ENCODE measurements at regions of chr5 and their contacts with region 1.

Region 1: DNA sequence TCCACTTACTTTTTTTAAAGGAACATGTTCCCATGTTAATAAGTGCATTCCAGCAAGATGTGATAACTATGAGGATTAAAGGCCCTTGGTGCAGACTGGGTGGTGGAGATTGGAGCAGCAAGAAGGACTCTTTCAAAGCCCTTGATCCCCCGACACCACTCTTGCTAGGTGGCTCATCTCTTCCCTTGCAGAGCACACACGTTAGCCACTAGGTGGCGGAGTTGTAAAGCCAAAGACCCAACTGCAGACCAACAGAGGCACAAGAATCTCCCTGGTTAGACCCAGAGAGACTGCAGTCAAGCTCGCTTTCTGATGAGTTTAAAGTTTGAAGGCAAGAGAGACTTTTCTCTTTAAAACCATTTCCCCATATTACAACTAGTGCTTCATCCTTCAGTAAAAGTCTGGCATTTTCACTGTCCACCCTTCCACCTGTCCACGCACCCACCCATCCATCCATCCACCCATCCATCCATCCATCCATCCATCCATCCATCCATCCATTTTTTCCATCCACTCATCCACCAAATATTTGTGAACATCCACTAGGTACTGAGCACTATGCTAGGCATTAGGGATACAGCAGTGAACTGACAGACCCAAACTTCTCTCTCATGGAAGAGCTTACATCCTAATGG is 226.9 kb downstream of the MSX2 start:
- DNase-seq: peak; percentile 89
- H3K4me3 Mint-ChIP-seq: no peak overlapping the region
- H3K27ac Mint-ChIP-seq: no peak overlapping the region
- H3K4me1 Mint-ChIP-seq: no peaks in the 10 kb centered on the region
- H3K27me3 Mint-ChIP-seq: peaks cover 54% of the 10 kb centered on the region
- CTCF ChIP-seq: peak; percentile 93

Region 2: GRCh38 chr5:174755103-174755502 is 196.2 kb before region 1 on chr5:
- CTCF ChIA-PET with region 1: no interaction called
- POLR2A ChIA-PET with region 1: no interaction called
- intact Hi-C with region 1: no loop called
- DNase-seq: peak; percentile 38
- H3K4me3 Mint-ChIP-seq: no peak overlapping the region
- H3K27ac Mint-ChIP-seq: no peak overlapping the region
- H3K4me1 Mint-ChIP-seq: peaks cover 5% of the 10 kb centered on the region
- H3K27me3 Mint-ChIP-seq: no peaks in the 10 kb centered on the region
- CTCF ChIP-seq: peak; percentile 33

Region 3: DNA sequence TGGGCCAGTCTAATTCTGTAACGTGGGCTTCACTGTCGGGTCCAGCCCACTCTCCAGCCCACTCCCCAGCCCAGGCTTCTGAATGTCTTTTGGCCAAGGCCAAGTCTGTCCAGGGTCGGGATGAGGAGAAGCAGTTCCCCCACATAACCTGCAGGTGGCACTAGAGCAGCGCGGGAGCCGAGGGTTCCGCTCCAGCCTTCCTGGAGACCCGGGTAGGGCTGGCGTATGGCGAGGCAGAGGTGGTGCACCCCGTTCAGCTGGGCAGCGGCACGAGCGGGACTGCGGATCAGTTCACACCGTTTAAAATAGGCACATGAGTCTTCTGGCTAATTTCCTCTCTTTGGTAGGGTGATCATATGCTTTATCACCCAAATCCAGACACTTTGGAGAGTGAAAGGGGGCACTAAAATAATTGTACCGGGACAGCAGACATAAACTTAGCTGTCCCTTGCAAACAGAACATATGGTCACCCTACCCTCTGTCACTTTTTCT is 41.0 kb before region 1 on chr5:
- CTCF ChIA-PET with region 1: interaction called, 13 read pairs
- POLR2A ChIA-PET with region 1: no interaction called
- intact Hi-C with region 1: no loop called
- DNase-seq: peak; percentile 77
- H3K4me3 Mint-ChIP-seq: no peak overlapping the region
- H3K27ac Mint-ChIP-seq: no peak overlapping the region
- H3K4me1 Mint-ChIP-seq: no peaks in the 10 kb centered on the region
- H3K27me3 Mint-ChIP-seq: peaks cover 43% of the 10 kb centered on the region
- CTCF ChIP-seq: peak; percentile 99

Region 4: DNA sequence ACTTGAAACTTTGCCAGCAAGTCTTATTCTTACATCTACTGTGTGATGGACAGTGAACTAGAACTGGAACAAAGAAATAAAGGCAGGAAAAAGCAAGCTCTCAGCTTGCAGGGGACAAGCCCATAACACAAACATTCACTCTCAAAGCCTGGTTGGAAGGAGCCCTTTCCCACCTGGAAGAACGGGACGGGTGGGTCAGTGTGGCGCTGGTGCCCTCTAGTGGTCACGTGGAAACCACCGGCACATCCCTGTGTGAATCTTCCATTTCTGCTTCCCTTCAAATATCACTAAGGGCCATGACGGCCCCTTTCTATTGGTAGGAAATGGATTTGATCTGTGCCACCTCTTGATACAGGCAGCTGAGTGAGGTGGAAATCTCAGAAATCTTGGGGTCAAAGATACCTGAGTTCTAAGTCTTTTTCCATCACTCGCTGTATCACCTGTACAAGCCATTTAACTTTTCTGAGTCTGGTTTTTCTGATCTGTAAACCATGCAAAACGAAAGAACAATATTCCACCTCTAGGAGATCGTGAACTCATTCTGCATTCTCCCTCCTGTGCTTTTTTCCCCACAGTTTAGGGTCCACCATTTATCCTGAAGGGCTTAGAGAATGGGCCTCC is 15.3 kb before region 1 on chr5:
- CTCF ChIA-PET with region 1: interaction called, 13 read pairs
- POLR2A ChIA-PET with region 1: no interaction called
- intact Hi-C with region 1: no loop called
- DNase-seq: peak; percentile 69
- H3K4me3 Mint-ChIP-seq: no peak overlapping the region
- H3K27ac Mint-ChIP-seq: no peak overlapping the region
- H3K4me1 Mint-ChIP-seq: no peaks in the 10 kb centered on the region
- H3K27me3 Mint-ChIP-seq: peaks cover 42% of the 10 kb centered on the region
- CTCF ChIP-seq: peak; percentile 99

Region 5: DNA sequence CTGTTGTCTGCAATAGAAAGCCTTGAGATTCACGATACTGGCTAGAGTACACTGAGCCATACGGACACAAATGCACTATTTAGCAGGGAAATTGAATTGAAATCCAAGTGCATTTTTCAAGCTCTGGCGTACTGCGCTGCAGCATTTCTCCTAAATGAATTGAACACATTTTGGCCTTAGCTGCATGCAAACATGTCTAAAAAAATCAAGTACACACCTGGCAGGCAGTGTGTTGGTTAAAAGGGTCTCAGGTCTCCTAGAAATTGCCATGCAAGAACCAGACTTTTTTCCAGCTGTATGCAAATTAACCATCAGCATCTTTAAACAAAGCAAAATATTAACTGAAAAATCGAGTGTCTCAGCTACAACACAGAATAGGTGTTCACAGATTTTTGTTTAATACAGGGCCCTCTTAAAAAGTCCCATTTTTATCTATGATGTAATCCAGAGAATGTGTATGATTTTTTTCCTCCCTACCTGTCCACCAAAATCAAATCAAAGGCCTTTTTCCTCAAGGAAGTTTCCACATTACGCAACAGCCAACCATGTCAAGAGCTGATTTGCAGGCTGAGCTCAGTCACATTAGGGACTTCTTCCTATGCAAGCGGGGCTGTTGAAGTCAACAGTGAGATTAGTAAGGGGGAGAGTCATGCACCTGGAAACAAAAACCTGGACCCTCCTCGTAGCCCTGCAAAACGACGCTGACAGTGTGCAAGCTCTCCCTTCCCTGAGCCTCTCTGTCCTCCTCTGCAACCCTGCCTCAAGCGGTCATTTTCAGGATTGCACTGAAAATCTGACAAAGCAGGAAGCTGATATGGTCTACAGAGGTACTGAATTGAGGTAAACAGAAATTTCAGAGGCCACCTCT is 513.0 kb after region 1 on chr5:
- CTCF ChIA-PET with region 1: interaction called, 80 read pairs
- POLR2A ChIA-PET with region 1: interaction called, 7 read pairs
- intact Hi-C with region 1: loop called (anchors 1 kb)
- DNase-seq: peak; percentile 74
- H3K4me3 Mint-ChIP-seq: no peak overlapping the region
- H3K27ac Mint-ChIP-seq: no peak overlapping the region
- H3K4me1 Mint-ChIP-seq: peaks cover 11% of the 10 kb centered on the region
- H3K27me3 Mint-ChIP-seq: peaks cover 13% of the 10 kb centered on the region
- CTCF ChIP-seq: peak; percentile 88

Region 6: GRCh38 chr5:175572886-175573285 is 621.6 kb after region 1 on chr5:
- CTCF ChIA-PET with region 1: no interaction called
- POLR2A ChIA-PET with region 1: no interaction called
- intact Hi-C with region 1: loop called (anchors 1 kb)
- DNase-seq: peak; percentile 31
- H3K4me3 Mint-ChIP-seq: no peak overlapping the region
- H3K27ac Mint-ChIP-seq: no peak overlapping the region
- H3K4me1 Mint-ChIP-seq: peaks cover 7% of the 10 kb centered on the region
- H3K27me3 Mint-ChIP-seq: peaks cover 17% of the 10 kb centered on the region
- CTCF ChIP-seq: no peak

Region 7: DNA sequence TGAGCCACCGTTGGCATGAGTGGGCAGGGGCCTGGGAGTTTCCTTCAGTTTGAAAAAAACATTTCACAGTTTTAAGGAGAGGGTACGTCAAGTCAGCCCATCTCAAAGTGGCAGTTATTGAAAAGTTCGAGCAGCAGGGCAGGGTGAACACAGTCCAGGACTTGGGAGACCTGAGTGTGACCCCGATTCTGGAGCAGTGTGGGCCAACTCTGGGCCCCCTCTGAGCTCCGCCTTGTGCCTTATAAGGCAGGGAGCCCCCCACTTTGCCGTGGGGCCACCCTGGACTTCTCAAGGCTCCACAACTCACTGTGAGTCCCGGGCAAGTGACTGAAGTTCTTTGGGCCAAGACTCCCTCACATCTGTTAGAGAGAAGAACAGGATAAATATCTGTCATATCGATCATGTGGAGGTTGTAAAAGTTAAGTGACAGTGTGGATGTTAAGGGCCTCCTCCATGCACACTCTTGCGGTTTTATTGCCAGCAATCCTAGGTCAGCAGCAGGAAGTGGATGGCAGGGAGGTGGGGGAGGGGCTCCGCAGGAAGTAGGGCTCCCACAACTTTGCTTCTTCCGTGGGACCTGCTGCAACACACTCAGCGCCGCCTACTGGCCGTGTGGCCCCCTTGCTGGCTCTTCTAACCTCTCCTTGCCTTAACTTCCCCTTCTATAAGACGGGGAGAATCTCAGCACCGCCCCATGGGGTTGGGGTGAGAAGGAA is 745.0 kb after region 1 on chr5:
- CTCF ChIA-PET with region 1: interaction called, 3 read pairs
- POLR2A ChIA-PET with region 1: no interaction called
- intact Hi-C with region 1: loop called (anchors 1 kb)
- DNase-seq: peak; percentile 60
- H3K4me3 Mint-ChIP-seq: no peak overlapping the region
- H3K27ac Mint-ChIP-seq: no peak overlapping the region
- H3K4me1 Mint-ChIP-seq: no peaks in the 10 kb centered on the region
- H3K27me3 Mint-ChIP-seq: peaks cover 33% of the 10 kb centered on the region
- CTCF ChIP-seq: peak; percentile 48

Region 8: DNA sequence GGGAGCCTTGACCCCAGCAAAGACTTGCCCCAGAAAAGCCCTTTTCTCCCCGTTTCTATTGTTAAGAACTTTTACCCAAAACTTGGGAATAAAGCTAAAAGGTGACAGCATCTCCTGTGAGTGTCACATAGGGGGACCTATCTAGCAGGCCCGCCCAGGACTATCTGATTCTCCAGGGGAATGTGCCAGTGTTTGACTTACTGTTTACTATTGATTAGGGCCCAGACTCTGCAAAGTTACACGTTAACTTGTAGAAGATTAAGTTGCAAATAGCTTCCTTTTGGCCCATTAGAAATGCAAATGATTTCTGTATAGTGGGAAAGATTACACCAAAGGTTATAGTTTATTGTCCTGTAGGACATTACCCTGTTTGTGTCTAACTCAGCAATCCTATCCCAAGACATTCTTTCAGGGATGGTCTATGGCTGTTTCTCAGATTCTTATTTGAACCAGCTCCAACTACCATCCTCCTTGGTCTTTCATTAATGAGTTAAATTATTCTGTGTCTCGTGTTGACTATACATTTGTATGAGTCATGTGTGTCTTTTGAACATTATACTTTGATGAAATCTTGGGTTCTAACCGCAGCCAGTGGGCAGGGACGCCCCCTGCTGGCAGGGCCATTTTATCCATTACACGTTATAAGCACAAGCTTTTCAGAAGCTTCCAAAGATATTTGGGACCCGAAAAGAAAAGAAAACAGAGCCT is 767.3 kb after region 1 on chr5:
- CTCF ChIA-PET with region 1: interaction called, 5 read pairs
- POLR2A ChIA-PET with region 1: no interaction called
- intact Hi-C with region 1: loop called (anchors 5 kb)
- DNase-seq: peak; percentile 55
- H3K4me3 Mint-ChIP-seq: no peak overlapping the region
- H3K27ac Mint-ChIP-seq: no peak overlapping the region
- H3K4me1 Mint-ChIP-seq: no peaks in the 10 kb centered on the region
- H3K27me3 Mint-ChIP-seq: peaks cover 38% of the 10 kb centered on the region
- CTCF ChIP-seq: peak; percentile 72